Esophagus muscularis mucosa (tissue), 4 donors: ENCODE measurements at regions of chr3 and their contacts with region 1.

Region 1: DNA sequence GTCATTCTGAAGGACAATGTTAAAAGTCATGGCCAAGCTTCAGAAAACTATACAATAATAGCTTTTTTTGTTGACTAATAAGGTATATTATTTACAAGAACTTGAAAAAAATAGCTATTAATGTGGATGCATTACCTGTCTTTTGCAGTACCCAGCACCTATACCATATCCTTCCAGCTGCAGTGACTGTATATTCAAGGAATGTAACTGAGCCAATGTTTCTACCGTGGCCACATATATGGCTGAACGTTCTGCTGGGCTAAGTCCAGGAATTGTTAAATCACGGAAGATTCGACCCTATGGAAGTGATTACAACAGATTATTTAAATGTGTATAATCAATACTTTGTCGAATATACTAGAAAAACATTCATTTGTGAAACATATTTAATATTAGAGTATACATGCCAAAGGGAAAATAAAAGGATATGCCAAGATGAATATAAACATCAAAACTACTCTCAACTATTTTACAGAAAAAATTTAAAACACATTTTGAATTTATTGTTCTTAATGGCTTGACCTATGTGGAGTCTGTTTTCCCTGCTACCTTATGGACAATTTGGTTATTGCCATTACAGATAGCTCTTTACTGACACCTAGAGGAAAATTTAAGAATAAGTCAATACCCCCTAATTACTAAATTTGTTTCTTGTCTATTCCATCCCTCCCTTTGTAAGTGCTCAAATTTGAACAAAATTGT is 17.6 kb downstream of the ACAD11 start:
- DNase-seq: no peak
- H3K4me3 ChIP-seq: no peak overlapping the region
- H3K27ac ChIP-seq: no peak overlapping the region
- H3K4me1 ChIP-seq: no peaks in the 10 kb centered on the region
- H3K27me3 ChIP-seq: no peaks in the 10 kb centered on the region
- CTCF ChIP-seq: peak; percentile 63 to 82 (median 73)
- EP300 ChIP-seq: no peak
- POLR2A ChIP-seq: no peak

Region 2: DNA sequence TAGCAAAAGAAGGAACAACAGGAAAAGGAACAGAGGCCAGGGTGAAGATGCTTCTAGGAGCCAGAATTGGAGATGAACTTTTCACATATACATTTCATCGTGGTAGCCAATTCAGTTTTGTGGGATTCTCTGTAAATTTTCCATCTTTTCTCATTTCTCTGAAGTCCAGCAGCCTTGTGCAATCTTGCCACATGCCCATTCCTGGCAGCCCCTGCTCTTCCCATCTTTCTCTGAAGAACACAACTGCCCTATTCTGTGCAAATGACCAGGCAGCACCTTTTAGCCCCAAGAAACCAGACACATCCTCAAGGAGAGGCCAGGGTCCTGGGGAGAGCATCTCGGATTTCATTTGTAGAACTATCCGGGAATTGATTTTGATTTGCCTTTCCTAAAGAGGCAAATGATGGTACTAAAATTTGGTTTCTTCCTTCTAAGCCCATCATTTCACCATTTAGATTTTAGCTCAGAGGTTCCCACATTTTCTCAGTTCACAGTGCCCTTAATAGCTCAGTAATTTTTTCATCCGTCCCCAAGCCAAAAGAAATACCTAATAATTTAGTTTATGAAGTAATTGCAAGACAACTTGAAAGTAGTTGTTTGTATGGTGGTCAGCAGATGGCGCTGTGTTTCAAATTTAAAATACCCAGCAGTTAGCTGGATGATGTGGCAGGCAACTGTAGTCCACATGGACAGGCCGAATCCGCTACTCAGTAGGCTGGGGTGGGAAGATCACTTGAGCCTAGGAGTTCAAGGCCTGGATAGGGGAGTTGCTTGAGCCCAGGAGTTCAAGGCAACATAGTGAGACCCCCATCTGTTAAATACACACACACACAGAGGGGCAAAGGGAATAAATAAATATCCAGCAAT is 106.2 kb before region 1 on chr3:
- intact Hi-C with region 1: loop called (anchors 2 kb)
- DNase-seq: no peak
- H3K4me3 ChIP-seq: no peak overlapping the region
- H3K27ac ChIP-seq: no peak overlapping the region
- H3K4me1 ChIP-seq: peaks cover 0 to 8% (median 5%) of the 10 kb centered on the region in 4 donors
- H3K27me3 ChIP-seq: no peaks in the 10 kb centered on the region
- CTCF ChIP-seq: peak; percentile 62 to 67 (median 65)
- EP300 ChIP-seq: no peak
- POLR2A ChIP-seq: no peak